ENCODE measurements at regions of chr7 and their contacts with region 1.

Region 1: GRCh38 chr7:106461993-106462859 is 177.4 kb upstream of the NAMPT start:
- DNase-seq: no peak
- ATAC-seq: peak; percentile 61

Region 2: GRCh38 chr7:106176414-106177299 is 285.6 kb before region 1 on chr7:
- intact Hi-C with region 1: loop called (anchors 5 kb)
- DNase-seq: peak; percentile 91
- ATAC-seq: peak; percentile 94